GM10248 (cell line): ENCODE measurements at regions of chr10 and their contacts with region 1.

Region 1: DNA sequence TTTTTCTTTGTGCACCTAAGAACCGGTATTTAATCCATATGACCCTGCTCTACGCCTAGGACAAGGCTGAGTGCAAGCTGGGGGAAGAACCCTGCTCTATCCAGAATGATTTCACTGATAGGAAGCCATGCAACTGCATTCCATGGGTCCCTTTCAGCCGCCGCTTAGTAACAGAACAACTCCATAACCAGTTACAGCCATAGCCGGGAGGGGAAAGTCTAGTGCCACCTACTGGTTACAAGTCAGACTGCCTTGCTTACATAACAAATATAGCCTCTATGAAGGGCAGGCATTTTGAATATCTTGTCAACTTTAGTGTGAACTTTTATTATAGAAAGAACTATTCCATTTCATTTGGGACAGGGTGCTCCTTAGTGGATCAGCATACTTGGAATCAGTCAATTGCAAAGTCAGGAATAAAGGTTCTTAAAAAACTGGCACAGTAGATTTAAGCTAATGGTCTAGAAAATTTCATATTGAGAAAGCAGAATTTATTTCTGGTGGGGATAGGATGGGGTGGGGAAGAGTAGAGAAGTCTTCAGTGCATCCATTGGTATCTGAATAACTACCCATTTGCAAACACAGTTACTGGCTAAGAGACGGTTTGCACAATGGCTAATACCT is 521.7 kb downstream of the ADRA2A start:
- DNase-seq: peak; percentile 34
- CTCF ChIP-seq: peak; percentile 73

Region 2: GRCh38 chr10:111612273-111612672 is 13.7 kb after region 1 on chr10:
- CTCF ChIA-PET with region 1: interaction called, 20 read pairs
- POLR2A ChIA-PET with region 1: no interaction called
- DNase-seq: no peak
- CTCF ChIP-seq: no peak

Region 3: GRCh38 chr10:112022196-112022595 is 423.6 kb after region 1 on chr10:
- CTCF ChIA-PET with region 1: no interaction called
- POLR2A ChIA-PET with region 1: no interaction called
- DNase-seq: no peak
- CTCF ChIP-seq: no peak